Activated CD4-positive, alpha-beta memory T cell treated with anti-CD3 and anti-CD28 coated beads, Interleukin-2, amount 10 ng/mL, durations not matched to agents 7 days and 5 days (primary cell): ENCODE measurements at regions of chr19 and their contacts with region 1.

Region 1: DNA sequence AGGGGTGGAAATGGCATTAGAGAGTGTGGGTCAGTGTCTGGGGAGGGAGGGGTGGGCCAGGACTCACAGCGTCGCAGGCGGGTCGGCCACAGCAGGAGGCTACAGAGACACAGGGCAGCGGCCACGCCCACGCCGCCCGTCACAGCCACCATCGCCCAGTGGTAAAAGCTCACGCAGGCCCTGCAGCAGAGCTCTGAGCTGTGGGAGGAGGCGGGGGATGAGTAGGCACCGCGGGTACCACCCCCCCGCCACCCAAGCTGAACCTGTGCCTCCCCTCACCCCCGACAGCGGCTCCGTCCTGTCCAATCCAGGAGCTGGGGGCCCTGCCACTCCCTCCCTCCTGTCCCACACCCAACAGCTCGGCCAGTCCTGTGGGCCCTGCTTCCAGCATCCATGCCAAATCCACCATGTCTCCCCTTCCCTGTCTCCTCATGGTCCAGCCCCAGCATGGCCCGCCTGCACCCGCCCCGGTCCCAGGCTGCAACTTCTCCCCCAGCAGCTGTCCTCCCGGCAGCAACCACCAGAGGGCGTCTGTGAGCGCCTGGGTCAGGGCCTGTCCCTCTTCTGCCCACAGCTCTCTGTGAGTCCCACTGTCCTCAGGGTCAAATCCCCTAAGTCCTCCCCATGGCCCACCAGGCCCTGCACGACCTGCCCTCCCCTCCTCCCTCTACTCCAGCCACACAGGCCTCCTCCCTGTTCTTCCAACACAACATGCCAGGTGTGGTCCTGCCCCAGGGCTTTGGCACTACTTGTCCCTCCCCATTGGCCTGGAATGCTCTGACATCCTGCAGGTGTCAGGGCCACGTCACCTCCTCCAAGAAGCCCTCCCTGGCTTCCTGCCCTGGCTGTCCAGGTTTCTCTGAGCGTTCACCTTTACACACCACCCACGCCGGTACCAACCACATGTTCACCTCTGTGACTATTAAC is 6.0 kb downstream of the TEKTIP1 start:
- DNase-seq: peak; percentile 81
- H3K4me3 Mint-ChIP-seq: no peak overlapping the region
- H3K27ac Mint-ChIP-seq: no peak overlapping the region
- H3K4me1 Mint-ChIP-seq: peaks cover 3% of the 10 kb centered on the region
- H3K27me3 Mint-ChIP-seq: no peaks in the 10 kb centered on the region

Region 2: GRCh38 chr19:3526507-3527244 is 18.3 kb before region 1 on chr19:
- CTCF ChIA-PET with region 1: no interaction called
- POLR2A ChIA-PET with region 1: no interaction called
- DNase-seq: no peak
- H3K4me3 Mint-ChIP-seq: no peak overlapping the region
- H3K27ac Mint-ChIP-seq: no peak overlapping the region
- H3K4me1 Mint-ChIP-seq: no peaks in the 10 kb centered on the region
- H3K27me3 Mint-ChIP-seq: no peaks in the 10 kb centered on the region

Region 3: GRCh38 chr19:3557461-3558248 is 12.7 kb after region 1 on chr19 and contains the start of gene MFSD12:
- CTCF ChIA-PET with region 1: interaction called, 40 read pairs
- POLR2A ChIA-PET with region 1: interaction called, 42 read pairs
- DNase-seq: peak; percentile 94
- H3K4me3 Mint-ChIP-seq: peak within 1 kb of the TSS; percentile 86
- H3K27ac Mint-ChIP-seq: peak within 1 kb of the TSS; percentile 73
- H3K4me1 Mint-ChIP-seq: peaks cover 37% of the 10 kb centered on the region
- H3K27me3 Mint-ChIP-seq: no peaks in the 10 kb centered on the region
- total RNA-seq, gene MFSD12: 51.4 to 55.1 TPM

Region 4: GRCh38 chr19:3580156-3580934 is 35.3 kb after region 1 on chr19:
- CTCF ChIA-PET with region 1: no interaction called
- POLR2A ChIA-PET with region 1: no interaction called
- DNase-seq: no peak
- H3K4me3 Mint-ChIP-seq: no peak overlapping the region
- H3K27ac Mint-ChIP-seq: no peak overlapping the region
- H3K4me1 Mint-ChIP-seq: no peaks in the 10 kb centered on the region
- H3K27me3 Mint-ChIP-seq: peaks cover 4% of the 10 kb centered on the region